OCI-LY7 (cell line): ENCODE measurements at regions of chr2 and their contacts with region 1.

Region 1: GRCh38 chr2:24315669-24316068 is 44.7 kb downstream of the ITSN2 start:
- DNase-seq: peak; percentile 50
- H3K4me3 ChIP-seq: peak overlapping the region; percentile 29
- H3K27ac ChIP-seq: peak overlapping the region; percentile 61
- H3K4me1 ChIP-seq: peaks cover 20% of the 10 kb centered on the region
- CTCF ChIP-seq: no peak

Region 2: DNA sequence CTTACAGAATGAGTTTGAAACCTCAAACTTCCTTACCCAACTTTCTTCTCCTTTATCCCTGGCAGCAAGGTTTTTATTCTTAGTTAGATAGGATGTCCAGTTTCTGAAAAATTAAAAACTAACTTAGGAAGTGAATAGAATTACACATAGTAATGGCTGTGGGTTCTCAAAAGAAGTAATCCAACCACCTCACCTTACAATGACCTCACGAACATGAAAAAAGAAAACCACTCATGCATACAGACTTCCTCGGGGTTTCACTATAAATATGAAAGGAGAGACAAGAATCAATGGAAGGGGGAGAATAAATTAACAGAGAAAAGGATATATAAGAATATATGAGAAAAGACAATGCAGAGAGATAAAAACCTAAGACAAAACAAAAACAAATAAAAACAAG is 1975.0 kb before region 1 on chr2:
- CTCF ChIA-PET with region 1: no interaction called
- POLR2A ChIA-PET with region 1: no interaction called
- intact Hi-C with region 1: no loop called
- DNase-seq: no peak
- H3K4me3 ChIP-seq: no peak overlapping the region
- H3K27ac ChIP-seq: no peak overlapping the region
- H3K4me1 ChIP-seq: no peaks in the 10 kb centered on the region
- CTCF ChIP-seq: no peak

Region 3: DNA sequence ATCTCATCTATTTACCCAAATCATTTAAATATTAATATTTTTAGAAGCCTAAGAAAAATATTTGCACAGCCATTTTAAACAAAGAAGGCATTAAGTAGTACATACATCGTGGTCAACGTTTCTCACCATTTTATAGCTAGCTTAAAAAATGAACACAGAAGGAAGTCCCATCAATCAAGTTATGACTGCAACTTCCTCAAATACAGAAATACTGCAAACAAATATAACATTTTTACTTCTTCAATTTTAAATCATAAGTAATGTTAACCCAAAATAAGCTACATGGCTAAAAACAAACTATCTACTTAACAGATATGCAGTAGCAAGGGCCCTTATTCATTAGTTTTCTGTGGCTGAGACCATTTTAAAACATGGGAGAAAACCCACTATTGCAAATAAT is 14.0 kb after region 1 on chr2:
- CTCF ChIA-PET with region 1: no interaction called
- POLR2A ChIA-PET with region 1: interaction called, 25 read pairs
- intact Hi-C with region 1: no loop called
- DNase-seq: peak; percentile 45
- H3K4me3 ChIP-seq: peak overlapping the region; percentile 11
- H3K27ac ChIP-seq: peak overlapping the region; percentile 52
- H3K4me1 ChIP-seq: peaks cover 46% of the 10 kb centered on the region
- CTCF ChIP-seq: no peak